Activated CD4-positive, alpha-beta T cell treated with anti-CD3 and anti-CD28 coated beads, Interleukin-2, amount 10 ng/mL, durations not matched to agents 24 days and 14 days (primary cell): ENCODE measurements at regions of chr5 and their contacts with region 1.

Region 1: GRCh38 chr5:56900858-56901578 is 8.4 kb upstream of the SETD9 start:
- DNase-seq: peak; percentile 84
- H3K4me3 Mint-ChIP-seq: no peak overlapping the region
- H3K27ac Mint-ChIP-seq: no peak overlapping the region
- H3K4me1 Mint-ChIP-seq: peaks cover 2% of the 10 kb centered on the region
- H3K27me3 Mint-ChIP-seq: peaks cover 16% of the 10 kb centered on the region

Region 2: GRCh38 chr5:56725711-56726411 is 175.2 kb before region 1 on chr5:
- intact Hi-C with region 1: no loop called
- DNase-seq: no peak
- H3K4me3 Mint-ChIP-seq: no peak overlapping the region
- H3K27ac Mint-ChIP-seq: no peak overlapping the region
- H3K4me1 Mint-ChIP-seq: no peaks in the 10 kb centered on the region
- H3K27me3 Mint-ChIP-seq: peaks cover 3% of the 10 kb centered on the region

Region 3: DNA sequence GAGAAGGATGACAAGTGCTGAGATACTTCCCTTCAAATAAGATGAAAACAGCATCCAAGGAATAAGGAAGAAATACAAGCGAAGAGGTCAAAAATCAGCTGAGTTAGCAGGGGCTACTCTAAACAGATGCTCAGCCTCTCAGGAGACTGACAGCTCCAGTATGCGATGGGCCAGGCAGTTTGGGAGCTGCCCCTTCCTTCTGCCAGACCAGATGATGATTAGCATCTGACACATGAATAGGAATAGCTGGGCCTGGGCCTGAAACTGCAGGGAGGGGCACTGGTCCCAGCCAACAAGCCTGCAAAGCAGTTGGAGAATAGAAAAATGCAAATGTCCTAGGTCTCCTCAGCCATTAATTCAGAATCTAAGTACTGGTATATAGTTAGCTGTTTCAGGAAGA is 98.8 kb before region 1 on chr5:
- intact Hi-C with region 1: no loop called
- DNase-seq: no peak
- H3K4me3 Mint-ChIP-seq: no peak overlapping the region
- H3K27ac Mint-ChIP-seq: no peak overlapping the region
- H3K4me1 Mint-ChIP-seq: peaks cover 7% of the 10 kb centered on the region
- H3K27me3 Mint-ChIP-seq: peaks cover 20% of the 10 kb centered on the region

Region 4: DNA sequence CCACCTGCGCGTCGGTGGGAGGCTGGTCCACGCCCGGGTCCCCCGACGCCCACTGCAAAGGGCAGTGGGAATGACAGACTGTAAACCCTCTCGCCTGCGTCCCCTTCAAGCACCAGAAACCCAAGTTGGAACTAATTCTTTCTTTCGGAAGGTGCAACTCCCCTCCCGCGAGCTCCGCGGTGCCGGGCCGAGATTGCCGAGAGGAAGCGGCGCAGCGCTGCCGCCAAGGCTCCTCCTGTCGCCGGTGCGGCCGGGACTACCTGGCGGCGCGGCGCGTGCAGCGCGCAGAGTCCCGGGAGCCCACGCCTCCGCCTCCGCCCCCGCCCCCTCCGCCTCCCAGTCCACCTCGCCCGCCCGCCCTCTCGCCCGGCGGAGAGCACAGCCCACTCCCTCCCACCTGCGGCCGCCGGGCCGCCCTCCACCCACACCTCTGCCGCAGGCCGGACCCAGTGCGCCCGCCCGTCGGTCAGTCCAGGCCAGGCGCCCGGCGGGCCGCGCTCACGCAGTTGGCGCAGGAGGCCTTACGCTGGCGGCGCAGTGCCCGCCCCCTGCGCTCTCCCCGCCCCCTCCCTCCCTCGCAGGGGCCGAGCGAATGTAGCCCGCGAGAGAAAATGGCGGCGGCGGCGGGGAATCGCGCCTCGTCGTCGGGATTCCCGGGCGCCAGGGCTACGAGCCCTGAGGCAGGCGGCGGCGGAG is 85.9 kb before region 1 on chr5 and contains the start of gene MAP3K1:
- intact Hi-C with region 1: no loop called
- DNase-seq: peak; percentile 94
- H3K4me3 Mint-ChIP-seq: peak within 1 kb of the TSS; percentile 91
- H3K27ac Mint-ChIP-seq: peak within 1 kb of the TSS; percentile 92
- H3K4me1 Mint-ChIP-seq: peaks cover 43% of the 10 kb centered on the region
- H3K27me3 Mint-ChIP-seq: peaks cover 3% of the 10 kb centered on the region
- total RNA-seq, gene MAP3K1: 27.6 and 27.9 TPM in 2 replicates

Region 5: GRCh38 chr5:57137401-57137800 is 236.4 kb after region 1 on chr5:
- intact Hi-C with region 1: loop called (anchors 1 kb)
- DNase-seq: no peak
- H3K4me3 Mint-ChIP-seq: no peak overlapping the region
- H3K27ac Mint-ChIP-seq: no peak overlapping the region
- H3K4me1 Mint-ChIP-seq: no peaks in the 10 kb centered on the region
- H3K27me3 Mint-ChIP-seq: peaks cover 27% of the 10 kb centered on the region

Region 6: GRCh38 chr5:57277085-57277484 is 376.1 kb after region 1 on chr5:
- intact Hi-C with region 1: loop called (anchors 1 kb)
- DNase-seq: no peak
- H3K4me3 Mint-ChIP-seq: no peak overlapping the region
- H3K27ac Mint-ChIP-seq: no peak overlapping the region
- H3K4me1 Mint-ChIP-seq: no peaks in the 10 kb centered on the region
- H3K27me3 Mint-ChIP-seq: peaks cover 11% of the 10 kb centered on the region